Breast epithelium (tissue), 4 donors: ENCODE measurements at regions of chr15 and their contacts with region 1.

Region 1: GRCh38 chr15:98369081-98369716 is 279.1 kb upstream of the IGF1R start:
- DNase-seq: no peak
- H3K4me3 ChIP-seq: no peak overlapping the region
- H3K27ac ChIP-seq: no peak overlapping the region
- H3K4me1 ChIP-seq: no peaks in the 10 kb centered on the region
- H3K27me3 ChIP-seq: no peaks in the 10 kb centered on the region
- CTCF ChIP-seq: no peak
- POLR2A ChIP-seq: no peak

Region 2: GRCh38 chr15:98381446-98381845 is 12.2 kb after region 1 on chr15:
- intact Hi-C with region 1: loop called (anchors 1 kb)
- DNase-seq: no peak
- H3K4me3 ChIP-seq: no peak overlapping the region
- H3K27ac ChIP-seq: no peak overlapping the region
- H3K4me1 ChIP-seq: no peaks in the 10 kb centered on the region
- H3K27me3 ChIP-seq: no peaks in the 10 kb centered on the region
- CTCF ChIP-seq: no peak
- POLR2A ChIP-seq: no peak

Region 3: DNA sequence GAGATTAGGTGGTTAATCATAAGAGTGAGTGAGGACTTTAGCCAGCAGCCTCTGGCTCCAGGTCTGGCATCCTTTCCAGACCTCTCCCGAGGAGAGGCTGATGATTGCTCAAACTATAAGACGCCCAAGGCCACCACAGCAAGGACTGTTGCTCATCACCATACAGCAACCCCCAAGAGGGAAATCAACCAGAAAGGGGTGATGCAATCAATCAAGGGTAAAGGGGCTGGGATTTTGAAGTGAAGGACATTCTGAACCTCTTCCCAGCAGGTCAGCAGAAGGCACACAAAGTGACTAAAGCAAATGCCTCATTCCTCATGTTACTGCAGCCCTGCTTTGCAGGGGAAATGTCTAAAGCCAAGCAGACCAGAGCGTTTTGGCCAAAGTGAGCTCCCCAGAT is 31.8 kb after region 1 on chr15:
- intact Hi-C with region 1: no loop called
- DNase-seq: no peak
- H3K4me3 ChIP-seq: no peak overlapping the region
- H3K27ac ChIP-seq: no peak overlapping the region
- H3K4me1 ChIP-seq: peaks cover 0 to 4% of the 10 kb centered on the region in 2 donors
- H3K27me3 ChIP-seq: no peaks in the 10 kb centered on the region
- CTCF ChIP-seq: no peak
- POLR2A ChIP-seq: no peak